ENCODE measurements at regions of chr9 and their contacts with region 1.

Region 1: DNA sequence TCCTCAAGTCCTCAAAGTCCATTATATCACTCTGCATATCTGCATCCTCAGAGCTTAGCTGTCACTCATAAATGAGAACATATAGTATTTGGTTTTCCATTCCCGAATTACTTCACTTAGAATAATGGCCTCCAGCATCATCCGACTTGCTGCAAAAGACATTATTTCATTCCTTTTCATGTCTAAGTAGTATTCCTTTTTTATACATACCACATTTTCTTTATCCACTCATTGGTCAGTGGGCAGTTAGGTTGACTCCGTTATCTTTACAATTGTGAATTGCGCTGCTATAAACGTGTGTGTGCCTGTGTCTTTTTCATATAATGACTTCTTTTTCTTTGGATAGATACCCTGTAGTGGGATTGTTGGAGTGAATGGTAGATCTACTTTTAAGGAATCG is 117.2 kb downstream of the OR2K2 start:
- DNase-seq: no peak
- H3K4me3 ChIP-seq: no peak overlapping the region
- H3K27ac ChIP-seq: no peak overlapping the region
- H3K4me1 ChIP-seq: no peaks in the 10 kb centered on the region
- H3K27me3 ChIP-seq: no peaks in the 10 kb centered on the region
- CTCF ChIP-seq: no peak
- POLR2A ChIP-seq: no peak

Region 2: GRCh38 chr9:109251080-109251775 is 1961.6 kb before region 1 on chr9:
- intact Hi-C with region 1: loop called (anchors 5 kb)
- DNase-seq: peak in 1 of 2 donors; percentile 27
- H3K4me3 ChIP-seq: no peak overlapping the region
- H3K27ac ChIP-seq: no peak overlapping the region
- H3K4me1 ChIP-seq: no peaks in the 10 kb centered on the region
- H3K27me3 ChIP-seq: no peaks in the 10 kb centered on the region
- CTCF ChIP-seq: no peak
- POLR2A ChIP-seq: no peak

Region 3: DNA sequence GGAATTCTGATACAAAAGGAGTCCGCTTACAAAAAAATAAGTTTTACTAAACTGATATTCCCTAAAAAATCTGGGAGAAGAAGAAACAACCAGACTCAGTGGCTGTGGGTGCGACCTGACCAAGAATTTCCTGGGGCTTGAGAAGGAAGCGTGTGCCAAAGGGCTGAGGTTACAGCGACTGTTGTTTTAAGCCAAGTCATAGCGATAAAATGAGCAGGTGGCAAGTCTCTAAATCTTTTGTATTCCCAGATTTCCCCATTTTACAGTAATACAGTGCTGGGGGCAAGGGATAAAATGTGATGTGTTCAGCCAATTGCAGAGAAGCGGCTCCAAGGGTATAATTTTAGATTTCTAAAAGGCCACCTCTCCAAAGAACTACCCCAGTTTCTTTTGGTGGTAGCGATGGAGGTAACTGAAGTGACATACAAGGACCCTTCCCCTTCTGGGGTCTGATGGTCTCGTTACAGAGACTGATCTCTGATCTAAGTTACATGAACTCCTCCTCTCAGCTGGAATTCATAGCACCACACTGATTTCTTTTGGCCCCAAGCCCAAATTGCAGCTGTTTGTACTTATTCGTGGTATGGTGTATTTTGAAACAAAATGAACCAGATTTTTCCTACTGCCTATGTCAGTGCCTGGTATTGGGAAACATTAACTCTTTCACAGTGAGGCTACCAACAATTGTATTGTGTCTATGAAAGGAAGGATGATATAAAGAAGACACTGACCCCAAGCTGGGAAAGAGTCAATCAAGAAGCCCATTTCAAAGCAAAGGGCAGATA is 216.2 kb before region 1 on chr9:
- intact Hi-C with region 1: no loop called
- DNase-seq: no peak
- H3K4me3 ChIP-seq: no peak overlapping the region
- H3K27ac ChIP-seq: peak overlapping the region; percentile 34
- H3K4me1 ChIP-seq: peaks cover 60% of the 10 kb centered on the region
- H3K27me3 ChIP-seq: no peaks in the 10 kb centered on the region
- CTCF ChIP-seq: no peak
- POLR2A ChIP-seq: no peak